GM12878 (cell line): ENCODE measurements at regions of chr12 and their contacts with region 1.

Region 1: DNA sequence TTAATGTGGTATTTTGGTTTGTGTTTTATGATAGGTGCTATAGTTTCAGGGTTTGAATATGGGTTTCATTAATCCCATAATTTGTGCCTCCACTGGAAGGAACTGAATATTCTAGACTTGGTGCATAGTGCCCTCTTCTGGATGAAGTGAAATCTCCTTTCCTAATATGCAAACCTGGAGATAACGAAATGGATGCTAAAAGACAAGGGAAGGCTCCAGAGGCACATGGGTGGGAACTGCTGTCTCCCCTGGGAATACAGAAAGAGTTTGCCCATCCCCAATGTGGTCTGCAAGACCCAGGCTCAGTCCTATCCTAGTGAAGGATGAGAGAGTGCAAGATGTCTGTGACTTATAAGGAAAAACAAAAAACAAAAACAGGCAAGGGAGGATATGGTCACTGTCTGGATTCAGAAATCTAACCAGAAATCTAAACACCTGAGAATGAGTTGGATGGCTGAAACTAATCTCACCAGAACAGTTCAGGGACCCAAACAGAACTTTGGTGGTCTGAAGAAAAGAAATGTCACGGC is 142.3 kb upstream of the TMPO start:
- DNase-seq: no peak
- ATAC-seq: peak; percentile 87
- H3K4me3 ChIP-seq: no peak overlapping the region
- H3K27ac ChIP-seq: no peak overlapping the region
- H3K4me1 ChIP-seq: no peaks in the 10 kb centered on the region
- H3K27me3 ChIP-seq: no peaks in the 10 kb centered on the region; a peak in 1 of 4 replicates
- CTCF ChIP-seq: peak; percentile 56 to 77 (median 56); a peak in 5 of 6 replicates
- EP300 ChIP-seq: no peak
- POLR2A ChIP-seq: no peak
- RAD21 ChIP-seq: peak; percentile 83

Region 2: GRCh38 chr12:96985480-96986362 is 1387.4 kb before region 1 on chr12:
- CTCF ChIA-PET with region 1: interaction called, 12 read pairs
- POLR2A ChIA-PET with region 1: no interaction called
- RAD21 ChIA-PET with region 1: no interaction called
- SMC1A ChIA-PET with region 1: interaction called, 12 read pairs
- in situ Hi-C with region 1: no loop called
- intact Hi-C with region 1: no loop called
- DNase-seq: no peak
- ATAC-seq: peak; percentile 95
- H3K4me3 ChIP-seq: peak overlapping the region; percentile 28; the same call in 1 of the 2 replicates
- H3K27ac ChIP-seq: no peak overlapping the region
- H3K4me1 ChIP-seq: peaks cover 5% of the 10 kb centered on the region
- H3K27me3 ChIP-seq: peaks cover 0 to 6% of the 10 kb centered on the region in 2 experiments; a peak in 3 of 4 replicates
- CTCF ChIP-seq: peak; percentile 78 to 90 (median 80)
- EP300 ChIP-seq: no peak
- POLR2A ChIP-seq: no peak
- RAD21 ChIP-seq: peak; percentile 84

Region 3: GRCh38 chr12:97308576-97309198 is 1064.4 kb before region 1 on chr12:
- CTCF ChIA-PET with region 1: no interaction called
- POLR2A ChIA-PET with region 1: no interaction called
- RAD21 ChIA-PET with region 1: interaction called, 3 read pairs
- SMC1A ChIA-PET with region 1: no interaction called
- in situ Hi-C with region 1: loop called (anchors 25 kb)
- intact Hi-C with region 1: loop called (anchors 10 kb)
- DNase-seq: peak; percentile 15
- ATAC-seq: peak; percentile 45; the same call in 2 of the 3 replicates
- H3K4me3 ChIP-seq: no peak overlapping the region
- H3K27ac ChIP-seq: no peak overlapping the region
- H3K4me1 ChIP-seq: no peaks in the 10 kb centered on the region
- H3K27me3 ChIP-seq: no peaks in the 10 kb centered on the region
- CTCF ChIP-seq: peak; percentile 52 to 62 (median 57); a peak in 5 of 6 replicates
- EP300 ChIP-seq: no peak
- POLR2A ChIP-seq: no peak
- RAD21 ChIP-seq: peak; percentile 61

Region 4: DNA sequence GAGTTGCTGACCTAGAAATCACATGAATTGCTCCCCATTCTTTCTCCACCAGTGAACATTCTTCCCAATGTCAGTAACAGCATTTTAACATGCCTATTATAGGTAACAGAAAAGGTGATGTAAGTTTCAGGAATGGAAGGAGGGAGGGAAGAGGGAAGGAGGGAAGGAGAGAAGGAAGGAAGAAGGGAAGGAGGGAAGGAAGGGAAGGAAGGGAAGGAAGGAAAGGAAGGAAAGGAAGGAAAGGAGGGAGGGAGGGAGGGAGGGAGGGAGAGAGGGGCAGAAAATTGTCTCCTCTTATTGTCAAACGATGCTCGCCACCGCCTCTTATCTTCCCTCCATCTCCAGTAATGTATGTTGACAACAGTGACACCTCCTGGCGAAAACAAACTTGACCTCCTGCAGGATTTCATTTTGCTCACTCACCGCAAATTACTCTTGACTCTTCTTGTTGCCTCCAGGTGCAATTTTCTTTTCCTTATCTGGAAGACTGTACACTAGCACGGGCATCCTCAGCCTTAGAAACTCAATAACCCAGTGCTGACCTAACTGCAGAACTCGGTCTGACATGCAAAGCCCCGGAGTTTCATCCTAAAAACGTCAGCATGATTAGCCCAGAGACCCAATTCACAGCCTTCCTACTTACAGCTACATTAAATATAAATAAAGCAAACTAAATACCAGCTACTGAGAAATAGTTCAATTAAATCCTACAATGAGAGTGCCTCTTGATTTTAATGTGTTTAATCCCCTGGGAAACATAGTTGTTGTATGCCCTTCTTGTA is 370.2 kb before region 1 on chr12:
- CTCF ChIA-PET with region 1: no interaction called
- POLR2A ChIA-PET with region 1: no interaction called
- RAD21 ChIA-PET with region 1: interaction called, 4 read pairs
- SMC1A ChIA-PET with region 1: interaction called, 6 read pairs
- in situ Hi-C with region 1: no loop called
- intact Hi-C with region 1: loop called (anchors 2 kb)
- DNase-seq: no peak
- ATAC-seq: peak; percentile 91
- H3K4me3 ChIP-seq: no peak overlapping the region
- H3K27ac ChIP-seq: no peak overlapping the region
- H3K4me1 ChIP-seq: no peaks in the 10 kb centered on the region
- H3K27me3 ChIP-seq: no peaks in the 10 kb centered on the region; a peak in 1 of 4 replicates
- CTCF ChIP-seq: peak; percentile 52 to 60 (median 56); a peak in 5 of 6 replicates
- EP300 ChIP-seq: no peak
- POLR2A ChIP-seq: no peak
- RAD21 ChIP-seq: peak; percentile 58

Region 5: GRCh38 chr12:98227162-98227561 is 145.9 kb before region 1 on chr12:
- CTCF ChIA-PET with region 1: no interaction called
- POLR2A ChIA-PET with region 1: no interaction called
- RAD21 ChIA-PET with region 1: interaction called, 3 read pairs
- SMC1A ChIA-PET with region 1: interaction called, 3 read pairs
- in situ Hi-C with region 1: no loop called
- intact Hi-C with region 1: loop called (anchors 5 kb)
- DNase-seq: no peak
- ATAC-seq: no peak
- H3K4me3 ChIP-seq: no peak overlapping the region
- H3K27ac ChIP-seq: no peak overlapping the region
- H3K4me1 ChIP-seq: peaks cover 6% of the 10 kb centered on the region
- H3K27me3 ChIP-seq: no peaks in the 10 kb centered on the region
- CTCF ChIP-seq: peak in 1 of 3 experiments; percentile 26; a peak in 1 of 6 replicates
- EP300 ChIP-seq: no peak
- POLR2A ChIP-seq: no peak
- RAD21 ChIP-seq: peak; percentile 47; the same call in 1 of the 2 replicates

Region 6: GRCh38 chr12:98352218-98352811 is 20.8 kb before region 1 on chr12:
- CTCF ChIA-PET with region 1: interaction called, 10 read pairs
- POLR2A ChIA-PET with region 1: interaction called, 3 read pairs
- RAD21 ChIA-PET with region 1: interaction called, 4 read pairs
- SMC1A ChIA-PET with region 1: interaction called, 21 read pairs
- in situ Hi-C with region 1: no loop called
- intact Hi-C with region 1: no loop called
- DNase-seq: no peak
- ATAC-seq: peak; percentile 82
- H3K4me3 ChIP-seq: no peak overlapping the region
- H3K27ac ChIP-seq: no peak overlapping the region
- H3K4me1 ChIP-seq: peaks cover 4% of the 10 kb centered on the region; the same call in 1 of the 2 replicates
- H3K27me3 ChIP-seq: no peaks in the 10 kb centered on the region
- CTCF ChIP-seq: no peak
- EP300 ChIP-seq: peak in 1 of 2 experiments; percentile 24; a peak in 1 of 4 replicates
- POLR2A ChIP-seq: no peak
- RAD21 ChIP-seq: no peak

Region 7: DNA sequence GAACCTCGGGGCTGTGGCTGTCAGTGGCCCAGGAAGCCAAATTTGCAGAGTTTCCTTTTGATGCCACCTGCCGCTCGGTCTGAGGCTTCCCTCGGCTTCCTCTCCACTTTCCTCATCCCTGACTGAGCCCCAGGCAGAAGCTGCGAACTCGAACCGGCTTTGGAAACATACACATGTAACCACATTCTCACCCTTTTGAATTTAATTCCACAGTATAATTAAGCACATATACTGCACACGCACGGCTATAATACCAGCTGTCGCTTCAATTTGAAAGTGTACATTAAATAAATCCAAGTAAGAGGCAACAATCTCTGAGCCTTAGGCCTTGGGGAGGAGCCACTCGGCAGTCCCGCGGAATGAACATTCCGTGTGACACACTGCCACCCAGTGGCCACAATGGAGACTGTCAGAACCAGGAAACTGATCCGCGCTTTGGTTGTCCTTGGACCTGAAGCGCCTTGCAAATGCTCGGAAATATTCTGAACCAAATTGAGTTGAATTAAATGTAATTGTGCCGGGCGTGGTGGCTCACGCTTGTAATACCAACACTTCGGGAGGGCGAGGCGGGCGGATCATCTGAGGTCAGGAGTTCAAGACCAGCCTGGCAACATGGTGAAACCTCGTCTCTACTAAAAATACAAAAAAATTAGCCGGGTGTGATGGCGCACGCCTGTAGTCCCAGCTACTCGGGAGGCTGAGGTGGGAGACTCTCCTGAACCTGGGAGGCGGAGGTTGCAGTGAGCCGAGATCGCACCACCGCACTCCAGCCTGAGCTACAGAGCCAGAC is 24.4 kb after region 1 on chr12:
- CTCF ChIA-PET with region 1: interaction called, 12 read pairs
- POLR2A ChIA-PET with region 1: no interaction called
- RAD21 ChIA-PET with region 1: interaction called, 4 read pairs
- SMC1A ChIA-PET with region 1: interaction called, 11 read pairs
- in situ Hi-C with region 1: no loop called
- intact Hi-C with region 1: no loop called
- DNase-seq: peak; percentile 53
- ATAC-seq: peak; percentile 93
- H3K4me3 ChIP-seq: peak overlapping the region; percentile 63; the same call in 1 of the 2 replicates
- H3K27ac ChIP-seq: no peak overlapping the region
- H3K4me1 ChIP-seq: peaks cover 23% of the 10 kb centered on the region
- H3K27me3 ChIP-seq: no peaks in the 10 kb centered on the region
- CTCF ChIP-seq: peak; percentile 76 to 90 (median 87)
- EP300 ChIP-seq: 0 out of 4 replicates have a peak, but pooled peaks of 1 of the 2 experiments have one; percentile 13
- POLR2A ChIP-seq: no peak
- RAD21 ChIP-seq: peak; percentile 84